ENCODE measurements at regions of chr5 and their contacts with region 1.

Region 1: GRCh38 chr5:61823781-61824180 is 482.2 kb upstream of the KIF2A start:
- DNase-seq: no peak
- H3K4me3 ChIP-seq: no peak overlapping the region
- H3K27ac ChIP-seq: no peak overlapping the region
- H3K27me3 ChIP-seq: no peaks in the 10 kb centered on the region
- CTCF ChIP-seq: no peak

Region 2: DNA sequence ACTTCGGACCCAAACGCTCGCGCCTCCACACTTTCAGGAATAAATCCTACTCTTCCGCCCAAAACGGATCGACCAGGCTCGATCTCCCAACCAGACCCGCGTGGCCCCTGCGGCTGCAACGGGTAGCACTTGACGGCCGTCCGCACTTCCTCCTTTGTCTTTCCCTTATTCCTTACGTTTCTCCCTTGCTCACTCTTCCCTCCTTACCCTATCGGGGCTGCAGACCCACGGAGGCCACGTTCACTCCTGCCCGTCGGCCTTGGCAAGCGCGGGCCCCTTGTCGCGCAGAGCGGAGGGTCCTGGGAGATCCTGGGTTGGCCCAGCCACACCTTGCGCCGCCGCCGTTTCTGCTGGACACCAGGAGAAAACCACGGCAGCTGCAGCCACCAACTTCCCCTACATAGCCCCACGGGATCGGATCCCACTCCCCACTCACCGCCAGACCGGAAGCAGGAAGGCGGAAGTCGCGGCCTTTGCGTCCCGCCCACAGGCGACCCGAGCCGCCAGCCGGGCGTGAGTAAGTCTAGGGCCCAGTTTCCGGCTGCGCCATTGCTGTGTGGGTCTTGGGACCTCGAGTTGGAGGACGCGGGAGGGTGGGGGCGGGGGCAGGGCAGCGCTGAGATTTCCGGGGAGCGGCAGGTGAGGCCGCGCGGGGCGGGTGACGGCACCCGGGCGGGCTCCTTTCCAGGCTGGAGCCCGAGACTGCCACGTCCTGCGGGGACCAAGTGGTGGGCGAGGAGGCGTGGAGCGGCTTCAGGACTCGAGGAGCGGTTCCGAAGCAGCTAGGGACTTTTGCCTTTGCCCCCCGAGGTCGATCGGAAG is 661.6 kb before region 1 on chr5 and contains the start of gene SMIM15:
- intact Hi-C with region 1: loop called in 1 of 2 experiments (anchors 10 kb)
- DNase-seq: peak; percentile 71 to 89 (median 84)
- H3K4me3 ChIP-seq: peak within 1 kb of the TSS; percentile 62 to 99 (median 90)
- H3K27ac ChIP-seq: peak within 1 kb of the TSS; percentile 17 to 94 (median 85)
- H3K27me3 ChIP-seq: no peaks in the 10 kb centered on the region
- CTCF ChIP-seq: peak in 9 of 56 donors; percentile 5 to 30 (median 11)
- total RNA-seq, gene SMIM15: 15.6 to 39.1 (median 29.7) TPM

Region 3: GRCh38 chr5:61768692-61769281 is 55.0 kb before region 1 on chr5:
- intact Hi-C with region 1: no loop called
- DNase-seq: no peak
- H3K4me3 ChIP-seq: no peak overlapping the region
- H3K27ac ChIP-seq: peak overlapping the region in 1 of 59 donors; percentile 86
- H3K27me3 ChIP-seq: peaks cover 0 to 8% (median 0%) of the 10 kb centered on the region in 45 donors
- CTCF ChIP-seq: peak in 8 of 56 donors; percentile 8 to 30 (median 14)

Region 4: GRCh38 chr5:62326302-62326701 is 502.5 kb after region 1 on chr5:
- intact Hi-C with region 1: no loop called
- DNase-seq: no peak
- H3K4me3 ChIP-seq: no peak overlapping the region
- H3K27ac ChIP-seq: peak overlapping the region in 35 of 59 donors; percentile 6 to 98 (median 78)
- H3K27me3 ChIP-seq: no peaks in the 10 kb centered on the region
- CTCF ChIP-seq: no peak